Thyroid gland (tissue), 4 donors: ENCODE measurements at regions of chr1 and their contacts with region 1.

Region 1: DNA sequence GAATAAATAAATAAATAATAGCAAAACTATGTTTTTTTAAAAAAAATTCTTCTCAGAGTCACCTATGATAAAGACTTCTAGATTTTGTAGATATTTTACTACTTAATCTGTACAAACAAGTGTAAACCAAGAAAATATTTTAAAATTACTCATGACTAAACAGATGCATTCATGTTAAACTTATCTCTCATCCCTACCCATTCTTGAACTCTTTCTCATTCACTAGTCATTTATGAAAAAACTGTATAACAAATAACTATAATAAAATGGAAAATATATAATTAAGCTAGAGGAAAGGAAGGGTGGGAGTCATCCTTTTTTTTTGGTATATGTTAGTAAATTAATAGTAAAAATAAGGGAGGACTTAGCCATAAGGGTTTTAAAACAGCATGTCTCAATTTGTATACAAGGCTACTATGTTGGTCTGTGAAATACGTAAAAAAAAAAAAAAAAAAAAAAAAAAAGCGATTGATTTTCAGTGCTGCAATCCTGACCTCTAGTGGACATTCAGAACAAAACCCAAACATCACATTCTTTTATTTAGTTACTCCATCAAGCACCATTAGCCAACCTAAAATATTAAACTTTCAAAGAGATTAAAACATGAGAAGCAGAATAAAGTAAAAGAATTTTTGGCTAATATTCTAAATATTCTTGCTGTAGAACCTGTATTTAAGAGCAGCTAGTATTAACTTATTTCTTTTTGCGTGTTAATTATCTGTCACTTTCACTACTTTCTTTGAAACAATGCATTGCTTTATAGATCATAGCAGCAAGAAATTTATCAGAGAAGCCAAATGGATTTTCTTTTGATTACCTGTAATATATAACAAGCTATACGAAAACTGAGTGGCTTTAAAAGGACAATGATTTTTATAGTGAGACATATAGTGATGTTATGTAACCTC is 255.8 kb upstream of the CACYBP start:
- DNase-seq: no peak
- H3K4me3 ChIP-seq: no peak overlapping the region
- H3K27ac ChIP-seq: no peak overlapping the region
- H3K4me1 ChIP-seq: no peaks in the 10 kb centered on the region
- H3K27me3 ChIP-seq: no peaks in the 10 kb centered on the region
- CTCF ChIP-seq: peak; percentile 21 to 81 (median 54)
- POLR2A ChIP-seq: no peak

Region 2: GRCh38 chr1:174266991-174267612 is 476.8 kb before region 1 on chr1:
- intact Hi-C with region 1: loop called (anchors 5 kb)
- DNase-seq: no peak
- H3K4me3 ChIP-seq: no peak overlapping the region
- H3K27ac ChIP-seq: no peak overlapping the region
- H3K4me1 ChIP-seq: no peaks in the 10 kb centered on the region
- H3K27me3 ChIP-seq: no peaks in the 10 kb centered on the region
- CTCF ChIP-seq: no peak
- POLR2A ChIP-seq: no peak